ENCODE measurements at regions of chr16 and their contacts with region 1.

Region 1: DNA sequence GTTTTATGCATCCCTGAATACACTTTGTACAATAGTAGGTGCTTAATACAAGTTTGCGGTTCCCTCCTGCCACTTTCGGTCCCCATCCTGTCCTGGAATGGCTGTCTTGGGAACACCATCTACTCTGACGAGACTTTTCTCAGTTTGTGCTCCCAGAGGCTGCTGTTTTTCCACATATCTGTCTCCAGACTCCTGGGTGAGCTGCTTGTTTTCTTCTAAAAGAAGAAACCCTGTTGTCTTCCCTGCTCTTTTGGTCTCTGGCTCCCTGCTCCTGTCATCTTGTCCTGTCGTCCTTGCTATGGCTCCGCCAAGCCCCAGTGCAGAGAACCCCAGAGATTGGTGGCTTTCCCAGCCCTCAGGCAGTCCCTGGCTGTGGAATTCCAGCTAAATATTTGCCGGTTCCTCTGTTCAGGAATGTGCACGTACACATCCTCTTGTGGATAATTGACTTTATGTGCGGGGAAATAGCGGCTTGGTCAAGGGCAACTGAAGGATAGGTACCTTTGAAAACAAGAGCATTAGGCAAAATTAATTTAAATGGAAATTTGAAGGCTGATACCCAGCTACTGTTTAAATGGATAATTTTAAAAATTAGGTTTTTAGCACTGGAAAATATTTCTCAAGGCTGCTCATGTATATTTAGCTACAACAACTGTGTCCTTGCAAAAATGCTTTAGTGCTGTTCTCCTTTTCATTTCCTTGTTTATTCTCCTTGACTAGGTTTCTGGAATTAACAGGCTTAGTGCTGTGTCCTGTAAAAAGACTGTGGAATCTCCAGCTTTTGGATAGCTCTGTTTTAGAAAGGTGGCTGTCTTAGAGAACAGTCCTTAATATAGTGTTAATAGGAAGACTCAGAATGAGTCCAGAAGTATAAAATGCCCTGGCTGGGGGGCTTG is 50.2 kb upstream of the SLC12A3 start:
- DNase-seq: peak; percentile 67 to 68
- ATAC-seq: peak; percentile 88 to 89
- H3K4me3 ChIP-seq: peak overlapping the region; percentile 22
- H3K27ac ChIP-seq: peak overlapping the region; percentile 86 to 87
- H3K4me1 ChIP-seq: peaks cover 73% of the 10 kb centered on the region
- CTCF ChIP-seq: no peak
- EP300 ChIP-seq: no peak
- POLR2A ChIP-seq: no peak
- RAD21 ChIP-seq: no peak

Region 2: GRCh38 chr16:56093055-56093454 is 721.7 kb before region 1 on chr16:
- CTCF ChIA-PET with region 1: no interaction called
- POLR2A ChIA-PET with region 1: no interaction called
- DNase-seq: no peak
- ATAC-seq: no peak
- H3K4me3 ChIP-seq: no peak overlapping the region
- H3K27ac ChIP-seq: no peak overlapping the region
- H3K4me1 ChIP-seq: no peaks in the 10 kb centered on the region
- CTCF ChIP-seq: no peak
- EP300 ChIP-seq: no peak
- POLR2A ChIP-seq: no peak
- RAD21 ChIP-seq: no peak

Region 3: GRCh38 chr16:56729735-56730662 is 84.8 kb before region 1 on chr16 and contains the start of gene NUP93:
- CTCF ChIA-PET with region 1: no interaction called
- POLR2A ChIA-PET with region 1: no interaction called
- DNase-seq: peak; percentile 81 to 92
- ATAC-seq: peak; percentile 95 to 98
- H3K4me3 ChIP-seq: peak within 1 kb of the TSS; percentile 97
- H3K27ac ChIP-seq: peak within 1 kb of the TSS; percentile 83 to 90
- H3K4me1 ChIP-seq: peaks cover 17% of the 10 kb centered on the region; the same call in 1 of the 3 replicates
- CTCF ChIP-seq: no peak
- EP300 ChIP-seq: no peak
- POLR2A ChIP-seq: peak; percentile 86
- RAD21 ChIP-seq: no peak
- polyA plus RNA-seq, gene NUP93: 91.4 and 97.5 TPM in 2 replicates

Region 4: GRCh38 chr16:56767024-56767423 is 47.8 kb before region 1 on chr16:
- CTCF ChIA-PET with region 1: no interaction called
- POLR2A ChIA-PET with region 1: no interaction called
- DNase-seq: no peak
- ATAC-seq: no peak
- H3K4me3 ChIP-seq: no peak overlapping the region
- H3K27ac ChIP-seq: no peak overlapping the region
- H3K4me1 ChIP-seq: no peaks in the 10 kb centered on the region
- CTCF ChIP-seq: no peak
- EP300 ChIP-seq: no peak
- POLR2A ChIP-seq: no peak
- RAD21 ChIP-seq: no peak

Region 5: DNA sequence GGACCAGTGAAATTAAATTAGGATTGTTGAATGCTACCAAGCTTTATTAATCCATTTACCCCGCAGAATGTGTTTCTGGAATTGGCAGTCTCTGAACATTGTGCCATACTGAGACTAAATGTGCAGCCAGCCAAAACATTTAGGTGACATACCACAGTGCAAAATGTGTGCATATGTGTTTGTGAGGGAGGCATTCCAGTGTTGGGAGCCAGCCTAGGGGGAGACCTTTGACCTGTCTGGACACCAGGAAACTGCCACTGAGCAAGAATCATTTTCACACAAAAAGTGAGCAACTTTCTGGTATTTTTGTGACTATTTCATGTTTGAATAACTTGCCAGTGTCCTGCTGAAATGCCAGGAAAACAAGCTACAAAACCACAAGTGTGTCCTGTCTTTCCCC is 14.4 kb before region 1 on chr16:
- CTCF ChIA-PET with region 1: interaction called, 55 read pairs
- POLR2A ChIA-PET with region 1: no interaction called
- DNase-seq: no peak
- ATAC-seq: peak in 1 of 2 experiments; percentile 68; a peak in 3 of 6 replicates
- H3K4me3 ChIP-seq: no peak overlapping the region
- H3K27ac ChIP-seq: peak overlapping the region; percentile 15 to 58; a peak in 5 of 6 replicates
- H3K4me1 ChIP-seq: peaks cover 17% of the 10 kb centered on the region
- CTCF ChIP-seq: no peak
- EP300 ChIP-seq: no peak
- POLR2A ChIP-seq: no peak
- RAD21 ChIP-seq: no peak

Region 6: DNA sequence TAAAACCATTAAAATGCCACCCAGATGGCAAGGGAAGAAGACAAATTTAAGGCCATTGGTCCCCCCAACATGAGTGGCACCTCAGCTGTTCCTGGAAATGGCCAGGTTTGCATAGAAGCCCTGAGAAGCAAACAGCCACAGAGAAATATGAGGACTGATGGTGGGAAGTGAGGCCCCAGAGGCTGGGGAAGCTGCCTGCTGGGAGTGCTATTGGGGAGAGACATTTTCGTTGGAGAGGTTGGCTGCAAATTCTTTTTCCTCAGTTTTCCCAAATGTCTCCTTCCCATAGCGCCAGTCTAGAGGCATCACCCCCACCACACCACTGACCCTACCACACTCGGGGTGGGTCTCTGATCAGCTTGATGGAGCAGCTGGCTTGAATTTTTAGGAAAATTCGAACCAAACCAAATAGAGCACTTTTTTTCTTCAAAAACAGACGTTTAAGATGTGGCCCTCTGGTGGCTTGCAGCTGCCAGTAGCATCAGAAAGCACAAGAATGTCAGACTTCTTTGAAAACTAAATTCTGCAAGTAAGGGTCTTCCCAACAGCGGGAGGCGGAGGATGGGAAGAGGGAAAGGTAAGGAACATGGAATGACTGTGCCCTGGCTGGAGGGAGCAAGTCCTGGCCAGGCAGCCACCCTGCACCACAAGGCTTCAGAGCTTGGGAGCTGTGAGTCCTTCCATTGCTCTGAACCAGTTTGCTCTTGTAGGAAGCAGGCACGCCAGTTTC is 37.1 kb after region 1 on chr16:
- CTCF ChIA-PET with region 1: interaction called, 14 read pairs
- POLR2A ChIA-PET with region 1: no interaction called
- DNase-seq: peak in 1 of 2 experiments; percentile 44
- ATAC-seq: peak in 1 of 2 experiments; percentile 24; a peak in 3 of 6 replicates
- H3K4me3 ChIP-seq: no peak overlapping the region
- H3K27ac ChIP-seq: peak overlapping the region; percentile 1 to 68; a peak in 3 of 6 replicates
- H3K4me1 ChIP-seq: peaks cover 50% of the 10 kb centered on the region
- CTCF ChIP-seq: peak; percentile 41
- EP300 ChIP-seq: no peak
- POLR2A ChIP-seq: no peak
- RAD21 ChIP-seq: peak; percentile 39 to 50; a peak in 3 of 5 replicates

Measured in A549 (cell line).